ENCODE measurements at regions of chr7 and their contacts with region 1.

Region 1: DNA sequence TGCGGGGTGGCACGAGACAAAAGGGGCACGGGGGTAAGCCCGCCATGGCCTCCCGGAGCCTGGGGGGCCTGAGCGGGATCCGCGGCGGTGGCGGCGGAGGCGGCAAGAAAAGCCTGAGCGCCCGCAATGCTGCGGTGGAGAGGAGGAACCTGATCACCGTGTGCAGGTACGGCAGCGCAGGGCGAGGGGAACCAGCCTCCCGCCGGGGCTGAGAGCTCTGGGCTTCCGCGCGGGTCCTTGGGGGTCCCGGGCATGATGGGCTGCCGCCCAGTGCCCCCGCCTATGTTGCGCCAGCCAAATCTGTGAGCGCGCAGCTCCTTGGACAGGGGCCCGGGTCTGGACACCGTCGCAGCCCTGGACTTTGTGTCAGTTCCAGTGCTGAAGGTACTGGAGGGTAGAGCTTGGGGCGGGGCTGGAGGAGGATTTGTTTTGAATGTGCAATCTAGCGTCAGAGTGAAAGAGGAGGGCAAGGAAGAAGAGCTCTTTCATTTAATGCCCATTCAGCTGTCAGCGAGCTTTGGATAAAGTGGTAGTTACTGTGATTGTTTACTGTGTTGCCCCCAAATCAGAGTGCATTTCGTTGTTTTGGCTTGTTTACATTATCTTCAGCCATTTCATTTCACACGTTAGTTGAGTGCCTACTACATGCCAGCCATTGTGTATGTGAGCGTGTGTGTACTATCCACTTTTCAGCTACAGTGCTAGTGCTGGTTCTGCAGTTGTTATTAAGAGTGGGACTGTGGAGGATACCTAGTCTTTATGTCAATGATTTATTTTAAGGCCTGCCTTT is 777 bp downstream of the RUNDC3B start:
- DNase-seq: no peak
- H3K4me3 ChIP-seq: peak overlapping the region; percentile 66 to 71 (median 70)
- H3K27ac ChIP-seq: peak overlapping the region in 3 of 4 donors; percentile 27 to 47 (median 45)
- H3K4me1 ChIP-seq: peaks cover 0 to 23% (median 20%) of the 10 kb centered on the region in 4 donors
- H3K27me3 ChIP-seq: no peaks in the 10 kb centered on the region
- CTCF ChIP-seq: no peak
- EP300 ChIP-seq: no peak
- POLR2A ChIP-seq: no peak

Region 2: DNA sequence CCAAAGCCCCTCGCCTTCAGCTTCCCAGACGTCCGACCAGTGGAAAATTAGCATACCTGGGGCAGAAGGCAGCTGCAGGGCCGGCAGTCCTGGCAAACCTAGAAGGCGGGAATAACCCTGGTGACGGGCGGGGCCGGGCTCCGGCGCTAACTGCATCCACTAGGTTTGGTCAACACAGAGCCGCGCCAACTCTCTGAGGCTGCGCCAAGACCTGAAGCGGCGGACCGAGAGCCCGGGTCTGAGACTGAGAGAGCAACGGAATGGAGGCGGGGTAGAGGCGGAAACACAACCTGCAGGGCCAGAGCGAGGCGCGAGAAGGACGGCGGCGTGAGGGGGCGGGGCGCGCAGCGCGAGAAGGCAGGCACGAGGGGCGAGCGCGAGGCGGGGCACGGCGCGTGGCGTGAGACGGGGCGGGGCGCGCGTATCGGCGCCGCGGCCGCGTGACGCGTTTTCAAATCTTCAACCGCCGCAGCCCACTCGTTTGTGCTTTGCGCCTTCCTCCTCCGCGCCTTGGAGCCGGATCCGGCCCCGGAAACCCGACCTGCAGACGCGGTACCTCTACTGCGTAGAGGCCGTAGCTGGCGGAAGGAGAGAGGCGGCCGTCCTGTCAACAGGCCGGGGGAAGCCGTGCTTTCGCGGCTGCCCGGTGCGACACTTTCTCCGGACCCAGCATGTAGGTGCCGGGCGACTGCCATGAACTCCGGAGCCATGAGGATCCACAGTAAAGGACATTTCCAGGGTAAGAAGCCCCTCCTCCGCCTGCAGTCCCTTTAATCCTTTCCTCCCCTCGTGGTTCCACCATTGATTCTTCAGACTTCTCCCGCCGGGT is 247.3 kb after region 1 on chr7 and contains the starts of genes DBF4 and SLC25A40:
- intact Hi-C with region 1: loop called (anchors 10 kb)
- DNase-seq: peak; percentile 98
- H3K4me3 ChIP-seq: peak within 1 kb of the TSS; percentile 71 to 91 (median 85)
- H3K27ac ChIP-seq: peak within 1 kb of the TSS; percentile 91 to 96 (median 92)
- H3K4me1 ChIP-seq: peaks cover 20 to 29% (median 25%) of the 10 kb centered on the region in 4 donors
- H3K27me3 ChIP-seq: no peaks in the 10 kb centered on the region
- CTCF ChIP-seq: no peak
- EP300 ChIP-seq: no peak
- POLR2A ChIP-seq: no peak
- total RNA-seq, gene DBF4: 3.3 to 9.8 (median 6.2) TPM
- total RNA-seq, gene SLC25A40: 9.1 to 17.4 (median 11.2) TPM

Measured in esophagus muscularis mucosa (tissue), 4 donors.